Naive thymus-derived CD8-positive, alpha-beta T cell (primary cell): ENCODE measurements at regions of chr7 and their contacts with region 1.

Region 1: GRCh38 chr7:103148994-103149807 is at the start of gene NAPEPLD:
- DNase-seq: peak; percentile 51 to 90 (median 72)
- ATAC-seq: peak; percentile 90
- H3K4me3 Mint-ChIP-seq: peak within 1 kb of the TSS; percentile 91 to 99 (median 98)
- H3K27ac Mint-ChIP-seq: peak within 1 kb of the TSS; percentile 86 to 99 (median 98)
- H3K4me1 Mint-ChIP-seq: peaks cover 17 to 46% (median 44%) of the 10 kb centered on the region in 4 donors
- H3K27me3 Mint-ChIP-seq: peaks cover 0 to 7% (median 0%) of the 10 kb centered on the region in 5 donors
- polyA plus RNA-seq, gene NAPEPLD: 4.9 to 8.2 (median 5.3) TPM

Region 2: DNA sequence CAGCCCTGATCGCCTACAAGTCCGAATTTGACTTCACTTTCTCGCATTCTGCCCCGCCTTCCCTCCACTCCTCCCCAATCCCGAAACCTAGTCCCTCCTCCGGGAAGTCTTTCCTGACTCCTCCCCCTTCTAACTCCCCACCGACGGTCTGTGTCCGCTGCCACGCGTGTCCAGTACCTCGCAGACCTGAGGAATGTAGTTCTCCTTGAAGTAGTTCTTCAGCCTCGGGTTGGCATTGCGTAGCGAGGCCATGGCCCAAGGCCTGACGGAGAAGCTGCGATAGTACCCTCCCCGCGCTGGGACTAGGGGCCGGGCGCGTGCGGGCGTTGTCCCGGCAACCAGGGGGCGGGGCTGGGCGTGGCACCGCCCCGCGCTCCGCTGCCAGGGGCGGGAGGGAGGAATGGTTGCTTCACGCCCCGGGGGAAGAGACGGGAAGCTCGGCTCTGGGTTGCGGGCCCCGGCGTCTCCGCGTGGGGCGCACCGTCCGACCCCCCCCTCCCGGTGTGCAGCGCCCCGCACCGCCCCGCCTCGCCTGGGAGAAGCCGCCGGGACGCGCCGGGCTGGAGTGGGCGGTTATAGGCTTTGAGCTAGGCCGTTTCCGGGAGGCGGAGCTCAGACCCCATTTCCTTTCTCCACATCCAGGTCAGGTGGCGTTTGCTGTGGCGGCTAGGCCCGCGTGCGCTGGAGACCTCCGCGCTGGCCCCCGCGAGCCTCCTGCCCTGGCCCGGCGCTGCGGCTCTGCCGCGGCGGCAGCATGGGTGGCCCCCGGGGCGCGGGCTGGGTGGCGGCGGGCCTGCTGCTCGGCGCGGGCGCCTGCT is 74.5 kb before region 1 on chr7 and contains the starts of genes ARMC10 and FBXL13:
- POLR2A ChIA-PET with region 1: interaction called, 26 read pairs
- DNase-seq: peak; percentile 81 to 92 (median 90)
- ATAC-seq: peak; percentile 79
- H3K4me3 Mint-ChIP-seq: peak within 1 kb of the TSS; percentile 93 to 97 (median 96)
- H3K27ac Mint-ChIP-seq: peak within 1 kb of the TSS; percentile 88 to 99 (median 96)
- H3K4me1 Mint-ChIP-seq: peaks cover 22 to 50% (median 42%) of the 10 kb centered on the region in 4 donors
- H3K27me3 Mint-ChIP-seq: no peaks in the 10 kb centered on the region
- polyA plus RNA-seq, gene ARMC10: 38.3 to 45.8 (median 41.0) TPM
- polyA plus RNA-seq, gene FBXL13: 0.28 to 1.3 (median 0.85) TPM